MCF 10A (cell line): ENCODE measurements at regions of chr1 and their contacts with region 1.

Region 1: GRCh38 chr1:93846211-93846991 is 32.6 kb downstream of the DNTTIP2 start:
- DNase-seq: peak; percentile 83
- H3K4me3 Mint-ChIP-seq: peak overlapping the region; percentile 96
- H3K27ac Mint-ChIP-seq: peak overlapping the region; percentile 92
- H3K4me1 Mint-ChIP-seq: peaks cover 7% of the 10 kb centered on the region
- H3K27me3 Mint-ChIP-seq: no peaks in the 10 kb centered on the region
- CTCF ChIP-seq: no peak

Region 2: DNA sequence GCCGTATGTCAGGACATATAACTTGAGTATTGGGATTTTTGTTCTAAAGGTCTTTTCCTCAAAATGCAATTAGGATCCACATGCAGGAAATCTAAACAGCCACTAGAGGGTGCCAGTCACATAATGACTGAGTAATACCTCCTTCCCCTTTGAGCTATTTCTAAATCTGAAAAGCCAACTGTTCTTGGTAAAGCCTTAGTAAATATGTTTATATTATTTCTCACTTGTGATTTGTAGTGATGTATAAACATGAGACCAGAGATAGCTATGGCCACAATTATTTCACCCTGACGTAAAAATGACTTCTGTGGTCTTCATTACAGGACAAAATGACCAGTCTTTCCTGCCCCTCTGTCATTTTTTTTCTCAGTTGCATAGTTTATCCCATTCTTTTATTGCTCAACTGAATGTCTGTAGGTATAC is 541.7 kb before region 1 on chr1:
- CTCF ChIA-PET with region 1: interaction called, 10 read pairs
- POLR2A ChIA-PET with region 1: interaction called, 5 read pairs
- intact Hi-C with region 1: loop called (anchors 2 kb)
- DNase-seq: peak; percentile 80
- H3K4me3 Mint-ChIP-seq: no peak overlapping the region
- H3K27ac Mint-ChIP-seq: no peak overlapping the region
- H3K4me1 Mint-ChIP-seq: no peaks in the 10 kb centered on the region
- H3K27me3 Mint-ChIP-seq: no peaks in the 10 kb centered on the region
- CTCF ChIP-seq: peak; percentile 81

Region 3: GRCh38 chr1:93345633-93346420 is 500.6 kb before region 1 on chr1 and contains the start of gene DR1:
- CTCF ChIA-PET with region 1: no interaction called
- POLR2A ChIA-PET with region 1: interaction called, 11 read pairs
- intact Hi-C with region 1: no loop called
- DNase-seq: peak; percentile 92
- H3K4me3 Mint-ChIP-seq: peak within 1 kb of the TSS; percentile 98
- H3K27ac Mint-ChIP-seq: peak within 1 kb of the TSS; percentile 98
- H3K4me1 Mint-ChIP-seq: peaks cover 5% of the 10 kb centered on the region
- H3K27me3 Mint-ChIP-seq: no peaks in the 10 kb centered on the region
- CTCF ChIP-seq: no peak
- total RNA-seq, gene DR1: 103 and 104 TPM in 2 replicates

Region 4: GRCh38 chr1:93447516-93448291 is 398.7 kb before region 1 on chr1 and contains the start of gene FNBP1L:
- CTCF ChIA-PET with region 1: interaction called, 7 read pairs
- POLR2A ChIA-PET with region 1: interaction called, 51 read pairs
- intact Hi-C with region 1: loop called (anchors 1 kb)
- DNase-seq: peak; percentile 80
- H3K4me3 Mint-ChIP-seq: peak within 1 kb of the TSS; percentile 100
- H3K27ac Mint-ChIP-seq: peak within 1 kb of the TSS; percentile 95
- H3K4me1 Mint-ChIP-seq: peaks cover 27% of the 10 kb centered on the region
- H3K27me3 Mint-ChIP-seq: no peaks in the 10 kb centered on the region
- CTCF ChIP-seq: no peak
- total RNA-seq, gene FNBP1L: 30.7 and 31.8 TPM in 2 replicates

Region 5: GRCh38 chr1:93672069-93672468 is 174.3 kb before region 1 on chr1:
- CTCF ChIA-PET with region 1: interaction called, 14 read pairs
- POLR2A ChIA-PET with region 1: interaction called, 7 read pairs
- intact Hi-C with region 1: no loop called
- DNase-seq: peak; percentile 89
- H3K4me3 Mint-ChIP-seq: no peak overlapping the region
- H3K27ac Mint-ChIP-seq: peak overlapping the region; percentile 42
- H3K4me1 Mint-ChIP-seq: peaks cover 63% of the 10 kb centered on the region
- H3K27me3 Mint-ChIP-seq: no peaks in the 10 kb centered on the region
- CTCF ChIP-seq: no peak

Region 6: DNA sequence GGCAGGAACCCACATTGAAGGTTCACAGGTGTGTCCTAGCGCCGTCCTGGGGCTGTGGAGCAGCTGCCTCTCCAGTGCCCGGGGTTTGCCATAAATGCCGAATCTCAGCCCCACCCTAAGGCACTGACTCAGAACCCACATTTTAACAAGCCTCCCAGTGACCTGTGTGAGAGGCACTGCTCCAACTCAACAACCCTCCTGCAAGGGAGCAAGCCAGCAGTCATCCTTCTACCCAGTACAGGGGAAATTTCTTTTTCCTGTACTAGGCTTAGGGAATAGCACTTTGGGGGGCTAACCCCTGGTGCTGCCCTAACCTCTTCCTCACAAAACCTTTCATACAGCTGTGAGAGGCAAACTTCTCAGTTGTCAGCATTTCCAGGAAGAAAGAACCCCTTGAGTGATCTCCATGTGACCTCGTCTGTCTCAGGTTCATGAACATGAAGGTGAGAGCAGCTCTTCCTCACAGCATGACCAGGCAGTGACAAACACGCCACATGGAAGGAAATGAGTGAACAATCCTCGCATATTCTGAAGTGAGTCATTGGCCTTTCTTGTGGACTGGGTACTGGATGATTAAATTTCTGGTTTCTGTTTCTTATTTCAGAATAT is 153.3 kb before region 1 on chr1:
- CTCF ChIA-PET with region 1: interaction called, 5 read pairs
- POLR2A ChIA-PET with region 1: interaction called, 18 read pairs
- intact Hi-C with region 1: no loop called
- DNase-seq: peak; percentile 86
- H3K4me3 Mint-ChIP-seq: no peak overlapping the region
- H3K27ac Mint-ChIP-seq: no peak overlapping the region
- H3K4me1 Mint-ChIP-seq: no peaks in the 10 kb centered on the region
- H3K27me3 Mint-ChIP-seq: no peaks in the 10 kb centered on the region
- CTCF ChIP-seq: no peak